H1 (cell line): ENCODE measurements at regions of chr22 and their contacts with region 1.

Region 1: GRCh38 chr22:41517172-41518047 is 26.9 kb downstream of the POLR3H start:
- DNase-seq: peak in 1 of 2 experiments; percentile 98
- H3K4me3 ChIP-seq: no peak overlapping the region
- H3K27ac ChIP-seq: no peak overlapping the region
- H3K4me1 ChIP-seq: peaks cover 4 to 12% (median 9%) of the 10 kb centered on the region in 4 experiments
- H3K27me3 ChIP-seq: no peaks in the 10 kb centered on the region
- CTCF ChIP-seq: peak; percentile 86 to 91 (median 91)
- EP300 ChIP-seq: no peak
- POLR2A ChIP-seq: no peak
- RAD21 ChIP-seq: peak; percentile 96 to 97

Region 2: DNA sequence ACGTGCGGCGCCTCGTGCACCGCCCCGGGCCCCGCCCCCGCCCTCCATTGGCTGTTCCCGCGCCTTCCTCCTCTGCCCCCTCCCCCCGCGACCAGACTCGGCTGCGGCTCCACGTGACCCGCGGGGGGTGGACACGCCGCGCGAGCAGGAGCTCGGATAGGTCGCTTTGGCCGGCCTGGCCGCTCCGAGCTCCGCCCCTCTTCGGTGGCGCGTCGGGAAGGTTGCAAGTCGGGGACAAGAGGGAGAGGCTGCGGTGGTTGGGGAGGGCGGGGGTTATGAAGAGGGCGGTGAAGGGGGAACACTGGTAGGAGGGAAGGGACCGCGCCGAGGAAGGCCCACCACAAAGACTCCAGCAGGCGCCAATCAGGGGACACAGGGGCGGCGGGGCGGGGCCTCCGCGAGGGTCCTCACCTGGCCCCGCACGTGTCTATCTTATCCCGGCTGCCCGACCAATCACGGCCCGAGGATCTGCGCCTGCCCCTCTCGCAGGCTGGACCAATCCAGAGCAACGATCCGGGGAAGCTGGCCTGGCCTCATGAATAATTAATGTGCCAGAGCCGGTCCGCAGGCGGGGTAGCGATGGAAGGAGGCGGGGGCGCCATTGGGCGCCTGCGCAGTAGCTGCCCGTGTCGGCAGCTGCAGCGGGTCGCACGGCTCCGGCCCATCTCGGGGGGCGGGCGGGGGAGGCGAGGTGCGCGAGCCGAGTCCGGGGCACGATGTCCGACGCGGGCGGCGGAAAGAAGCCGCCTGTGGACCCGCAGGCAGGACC is 135.9 kb before region 1 on chr22 and contains the start of gene TEF:
- CTCF ChIA-PET with region 1: interaction called, 11 read pairs
- POLR2A ChIA-PET with region 1: interaction called, 8 read pairs
- DNase-seq: peak; percentile 97 to 98
- H3K4me3 ChIP-seq: peak within 1 kb of the TSS; percentile 66 to 79 (median 69)
- H3K27ac ChIP-seq: peak within 1 kb of the TSS; percentile 96
- H3K4me1 ChIP-seq: peaks cover 2 to 10% (median 5%) of the 10 kb centered on the region in 4 experiments
- H3K27me3 ChIP-seq: no peaks in the 10 kb centered on the region; a peak in 1 of 7 replicates
- CTCF ChIP-seq: no peak
- EP300 ChIP-seq: no peak
- POLR2A ChIP-seq: peak; percentile 24 to 54
- RAD21 ChIP-seq: no peak
- total RNA-seq, gene TEF: 7.4 and 8.9 TPM in 2 replicates

Region 3: GRCh38 chr22:41417622-41418390 is 99.6 kb before region 1 on chr22:
- CTCF ChIA-PET with region 1: interaction called, 22 read pairs
- POLR2A ChIA-PET with region 1: interaction called, 3 read pairs
- DNase-seq: no peak
- H3K4me3 ChIP-seq: no peak overlapping the region
- H3K27ac ChIP-seq: no peak overlapping the region
- H3K4me1 ChIP-seq: peaks cover 0 to 10% (median 9%) of the 10 kb centered on the region in 4 experiments; a peak in 6 of 7 replicates
- H3K27me3 ChIP-seq: no peaks in the 10 kb centered on the region; a peak in 1 of 7 replicates
- CTCF ChIP-seq: no peak
- EP300 ChIP-seq: no peak
- POLR2A ChIP-seq: no peak
- RAD21 ChIP-seq: no peak

Region 4: DNA sequence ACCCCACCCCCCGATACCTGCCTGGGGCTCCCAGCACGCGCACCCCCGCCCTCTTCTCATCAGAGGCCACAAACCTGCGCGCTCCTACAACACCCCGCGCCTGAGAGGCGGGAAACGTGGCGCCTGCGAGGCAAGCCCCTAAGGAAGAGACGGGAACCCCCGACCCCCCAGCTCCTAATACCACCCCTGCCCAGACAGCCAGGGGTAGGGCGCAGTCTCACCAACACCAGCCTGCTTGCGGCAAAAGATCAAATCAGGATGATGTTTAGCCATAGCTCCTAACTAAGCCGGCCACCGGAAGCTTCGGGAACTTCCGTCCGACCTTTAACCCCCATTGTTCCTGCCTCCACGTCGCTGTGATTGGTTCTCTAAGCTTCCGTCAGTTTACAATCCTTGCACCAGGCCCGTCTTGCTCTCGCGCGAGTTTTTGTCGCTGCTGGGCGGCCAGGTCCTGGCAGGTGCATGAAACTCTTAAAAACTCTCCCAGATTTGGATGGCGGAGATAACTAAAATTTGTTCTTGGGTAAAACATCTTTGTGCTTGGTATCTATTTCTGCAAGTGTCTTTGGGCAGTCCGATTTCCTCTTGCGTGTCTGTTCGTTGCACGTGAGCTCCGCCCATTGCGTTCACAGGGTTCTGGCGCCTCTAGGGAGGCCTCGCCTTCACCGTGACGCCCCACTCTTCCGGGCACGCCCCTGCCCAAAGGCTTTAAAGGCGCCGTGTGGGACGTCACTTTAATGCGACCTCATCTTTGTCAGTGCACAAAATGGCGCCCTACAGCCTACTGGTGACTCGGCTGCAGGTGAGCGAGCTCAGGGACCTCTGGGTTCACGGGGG is 48.8 kb before region 1 on chr22 and contains the starts of genes ACO2 and PHF5A:
- CTCF ChIA-PET with region 1: interaction called, 57 read pairs
- POLR2A ChIA-PET with region 1: interaction called, 24 read pairs
- DNase-seq: peak; percentile 85 to 99
- H3K4me3 ChIP-seq: peak within 1 kb of the TSS; percentile 74 to 93 (median 80)
- H3K27ac ChIP-seq: peak within 1 kb of the TSS; percentile 98
- H3K4me1 ChIP-seq: peaks cover 0 to 9% (median 7%) of the 10 kb centered on the region in 4 experiments; a peak in 4 of 7 replicates
- H3K27me3 ChIP-seq: no peaks in the 10 kb centered on the region
- CTCF ChIP-seq: no peak
- EP300 ChIP-seq: no peak
- POLR2A ChIP-seq: peak; percentile 69 to 91
- RAD21 ChIP-seq: no peak; a peak in 1 of 4 replicates
- total RNA-seq, gene ACO2: 72.4 and 75.4 TPM in 2 replicates
- total RNA-seq, gene PHF5A: 109 and 135 TPM in 2 replicates

Region 5: GRCh38 chr22:41485033-41485432 is 32.4 kb before region 1 on chr22:
- CTCF ChIA-PET with region 1: interaction called, 218 read pairs
- POLR2A ChIA-PET with region 1: interaction called, 5 read pairs
- DNase-seq: no peak
- H3K4me3 ChIP-seq: no peak overlapping the region
- H3K27ac ChIP-seq: no peak overlapping the region
- H3K4me1 ChIP-seq: peaks cover 27 to 44% (median 29%) of the 10 kb centered on the region in 4 experiments
- H3K27me3 ChIP-seq: no peaks in the 10 kb centered on the region
- CTCF ChIP-seq: no peak
- EP300 ChIP-seq: no peak
- POLR2A ChIP-seq: no peak
- RAD21 ChIP-seq: no peak

Region 6: DNA sequence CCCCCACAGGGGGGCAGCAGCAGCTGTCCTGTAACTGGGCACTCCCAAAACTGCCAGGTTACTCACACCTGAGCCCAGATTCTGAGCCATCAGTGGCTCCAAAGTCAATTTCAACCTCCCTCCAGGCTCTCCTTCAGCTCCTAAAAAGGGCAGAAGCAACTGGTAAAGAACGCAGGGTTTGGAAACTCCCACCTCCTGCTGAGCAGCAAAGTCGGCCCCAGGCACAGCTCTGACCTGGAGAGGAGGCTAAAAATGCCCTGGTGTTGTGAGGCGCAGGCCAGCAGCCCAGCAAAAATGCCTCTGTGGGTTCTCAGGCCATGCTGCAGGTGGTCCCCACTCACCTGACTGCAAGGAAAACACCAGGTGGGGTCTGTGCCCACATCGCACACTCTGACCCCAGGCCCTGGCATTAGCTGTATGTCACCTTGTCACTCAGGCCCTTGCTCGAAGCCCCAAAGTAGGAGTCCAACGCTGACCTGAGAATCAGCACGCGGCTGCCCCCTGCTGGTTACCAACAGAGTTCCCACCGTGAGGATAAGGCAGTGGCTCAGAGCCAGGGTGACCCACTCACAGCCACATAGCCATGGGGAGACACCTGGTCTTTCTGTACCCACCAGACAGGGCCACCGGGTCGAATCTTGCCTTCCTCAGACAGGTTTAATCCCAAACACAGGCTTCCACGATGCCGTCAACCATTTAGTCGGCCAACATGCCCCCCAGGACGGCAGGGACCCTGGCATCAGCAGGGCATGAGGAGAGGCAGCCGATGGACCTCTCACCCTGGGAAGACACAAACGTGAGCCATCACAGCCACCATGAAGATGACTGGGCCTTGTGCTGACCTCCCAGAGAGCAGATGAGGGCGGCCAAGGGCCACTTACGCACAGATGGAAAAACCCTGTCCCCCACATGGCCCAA is 15.8 kb after region 1 on chr22:
- CTCF ChIA-PET with region 1: interaction called, 52 read pairs
- POLR2A ChIA-PET with region 1: interaction called, 9 read pairs
- DNase-seq: peak in 1 of 2 experiments; percentile 91
- H3K4me3 ChIP-seq: no peak overlapping the region
- H3K27ac ChIP-seq: peak overlapping the region; percentile 48; the same call in 1 of the 2 replicates
- H3K4me1 ChIP-seq: peaks cover 0 to 7% (median 5%) of the 10 kb centered on the region in 4 experiments; a peak in 4 of 7 replicates
- H3K27me3 ChIP-seq: no peaks in the 10 kb centered on the region
- CTCF ChIP-seq: peak; percentile 83 to 91 (median 91)
- EP300 ChIP-seq: no peak
- POLR2A ChIP-seq: peak in 1 of 2 experiments; percentile 50; a peak in 1 of 3 replicates
- RAD21 ChIP-seq: peak; percentile 45 to 67